ENCODE measurements at regions of chr13 and their contacts with region 1.

Region 1: DNA sequence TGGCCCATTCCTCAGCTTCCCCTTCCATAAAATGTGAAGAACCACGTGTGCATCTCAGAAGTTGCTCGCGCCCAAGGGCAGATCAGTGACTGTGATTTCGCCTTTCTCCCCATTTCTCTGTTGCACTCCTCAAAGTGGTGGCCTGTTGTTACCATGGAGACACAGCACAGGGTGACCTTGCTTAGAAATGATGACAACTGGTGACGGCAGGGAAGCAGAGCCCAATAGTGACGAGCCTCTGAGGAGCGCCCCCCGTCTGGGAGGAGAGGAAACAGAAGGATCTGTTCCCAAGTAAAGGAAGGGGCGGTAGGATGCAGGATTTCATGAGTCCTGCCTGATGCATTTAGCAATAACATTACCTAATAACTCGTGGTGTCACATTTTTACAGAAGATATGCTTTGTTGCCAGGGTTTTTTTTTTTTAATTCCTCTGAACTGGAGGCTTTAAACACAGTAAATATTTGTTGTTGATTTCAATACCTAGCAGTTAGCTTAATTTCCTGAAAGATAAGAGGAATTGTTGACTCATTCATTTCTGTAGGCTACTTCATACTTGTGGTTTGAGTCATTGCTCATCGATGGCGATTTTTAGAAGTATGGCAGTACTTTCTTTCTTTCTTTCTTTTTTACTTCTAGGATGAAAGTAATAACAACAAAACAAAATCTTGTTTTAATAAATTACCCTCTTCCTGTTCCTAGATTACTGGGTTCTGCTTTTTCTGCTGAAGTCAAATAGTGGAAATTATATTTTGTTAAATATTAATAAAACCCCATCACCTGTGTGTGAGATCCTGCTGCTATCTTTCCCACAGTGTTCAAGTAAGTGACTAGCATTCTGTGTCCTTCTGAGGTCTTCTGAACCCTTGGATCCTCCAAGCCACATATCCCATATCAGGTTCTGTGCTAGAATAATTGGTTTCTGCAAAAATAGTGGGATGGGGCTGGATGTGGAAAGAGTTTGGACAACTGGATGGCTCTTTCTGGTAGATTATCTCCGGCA is 36.0 kb downstream of the MBNL2 start:
- DNase-seq: peak; percentile 27
- ATAC-seq: peak; percentile 45
- H3K4me3 Mint-ChIP-seq: peak overlapping the region; percentile 7
- H3K27ac Mint-ChIP-seq: peak overlapping the region; percentile 76
- H3K4me1 Mint-ChIP-seq: peaks cover 78% of the 10 kb centered on the region
- H3K27me3 Mint-ChIP-seq: no peaks in the 10 kb centered on the region

Region 2: DNA sequence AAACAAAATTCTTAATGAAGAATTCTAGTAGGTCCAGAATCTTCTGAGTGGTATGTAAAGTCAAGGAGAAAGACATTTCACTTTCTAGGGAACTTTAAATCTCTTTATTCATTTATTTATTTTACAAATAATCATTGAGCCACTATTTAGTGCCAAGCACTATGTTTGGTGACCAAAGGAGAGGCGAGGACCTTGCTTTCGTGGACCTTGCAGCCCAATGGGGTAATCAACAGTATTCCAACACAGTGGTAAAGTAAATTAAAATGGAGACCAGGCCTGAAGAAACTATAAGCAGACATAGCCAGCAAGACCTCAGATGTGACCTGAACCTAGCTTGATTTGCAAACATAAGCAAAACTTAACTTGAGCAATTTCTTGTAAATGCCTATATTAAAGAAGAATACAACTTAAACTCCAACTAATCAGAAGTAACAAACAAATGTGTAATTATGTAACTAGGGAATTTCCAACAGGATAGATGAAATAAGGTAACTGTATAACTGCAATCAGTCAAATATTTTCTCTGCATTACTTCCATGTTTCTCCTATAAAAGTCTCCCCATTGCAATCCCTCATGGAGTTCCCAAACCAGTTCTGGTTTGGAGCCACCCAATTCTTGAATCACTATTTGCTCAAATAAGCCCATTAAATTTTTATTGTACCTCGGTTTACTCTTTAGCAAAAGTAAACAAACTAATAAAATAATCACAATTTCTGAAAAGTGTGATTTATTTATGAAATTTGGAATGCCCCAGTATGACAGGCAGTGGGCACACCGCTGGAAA is 31.6 kb after region 1 on chr13:
- CTCF ChIA-PET with region 1: interaction called, 4 read pairs
- POLR2A ChIA-PET with region 1: no interaction called
- intact Hi-C with region 1: loop called (anchors 1 kb)
- DNase-seq: no peak
- ATAC-seq: no peak
- H3K4me3 Mint-ChIP-seq: no peak overlapping the region
- H3K27ac Mint-ChIP-seq: peak overlapping the region; percentile 74
- H3K4me1 Mint-ChIP-seq: peaks cover 44% of the 10 kb centered on the region
- H3K27me3 Mint-ChIP-seq: no peaks in the 10 kb centered on the region

Region 3: DNA sequence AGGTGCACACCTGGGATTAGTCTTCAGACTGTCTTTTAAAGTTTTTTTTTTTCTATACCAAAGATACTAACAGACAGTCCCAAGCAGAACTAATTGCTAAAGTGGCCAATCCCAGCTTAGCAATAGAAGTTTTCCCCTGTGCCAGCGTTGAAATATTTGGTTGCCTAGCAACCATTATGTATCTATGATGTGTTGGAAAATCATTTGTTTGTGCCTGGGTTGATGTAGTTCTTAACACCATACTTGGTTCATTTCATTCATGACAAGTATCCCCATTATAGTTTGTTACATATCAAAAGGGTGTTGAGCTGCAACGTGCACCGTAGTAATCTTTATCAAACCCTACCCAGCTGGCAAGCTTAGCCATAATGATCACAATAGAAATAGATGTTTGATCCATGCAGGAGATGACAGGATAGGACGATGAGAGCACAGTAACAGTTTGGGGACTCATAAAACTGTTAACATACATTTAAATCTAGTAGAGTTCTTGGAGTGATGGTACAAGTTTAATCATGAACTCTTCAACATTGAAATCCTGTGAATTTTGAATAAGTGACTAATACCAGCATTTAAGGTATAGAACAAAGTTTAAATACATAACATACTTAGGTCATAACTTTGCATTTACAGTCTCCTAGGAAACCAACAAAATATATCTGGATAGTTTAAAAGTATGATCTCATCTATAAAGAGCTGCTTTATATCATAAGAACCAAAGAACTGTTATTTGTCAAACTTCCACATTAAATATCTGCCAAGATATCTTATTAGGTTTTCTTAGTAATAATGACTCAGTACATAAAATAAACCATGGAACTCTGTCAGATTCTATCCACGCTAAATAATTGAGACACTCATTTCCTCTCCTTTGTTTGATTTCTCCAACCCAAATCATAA is 37.4 kb after region 1 on chr13:
- CTCF ChIA-PET with region 1: interaction called, 4 read pairs
- POLR2A ChIA-PET with region 1: no interaction called
- intact Hi-C with region 1: loop called (anchors 1 kb)
- DNase-seq: no peak
- ATAC-seq: no peak
- H3K4me3 Mint-ChIP-seq: no peak overlapping the region
- H3K27ac Mint-ChIP-seq: no peak overlapping the region
- H3K4me1 Mint-ChIP-seq: peaks cover 46% of the 10 kb centered on the region
- H3K27me3 Mint-ChIP-seq: no peaks in the 10 kb centered on the region

Region 4: GRCh38 chr13:97344265-97345175 is 86.4 kb after region 1 on chr13:
- CTCF ChIA-PET with region 1: no interaction called
- POLR2A ChIA-PET with region 1: no interaction called
- intact Hi-C with region 1: loop called (anchors 5 kb)
- DNase-seq: peak; percentile 73
- ATAC-seq: peak; percentile 80
- H3K4me3 Mint-ChIP-seq: no peak overlapping the region
- H3K27ac Mint-ChIP-seq: no peak overlapping the region
- H3K4me1 Mint-ChIP-seq: peaks cover 8% of the 10 kb centered on the region
- H3K27me3 Mint-ChIP-seq: no peaks in the 10 kb centered on the region

Measured in activated CD4-positive, alpha-beta T cell treated with anti-CD3 and anti-CD28 coated beads for 36 hours (primary cell).